ENCODE measurements at regions of chr7 and their contacts with region 1.

Region 1: GRCh38 chr7:83457022-83457892 is 191.7 kb downstream of the SEMA3E start:
- DNase-seq: no peak
- H3K4me3 ChIP-seq: no peak overlapping the region
- H3K27ac ChIP-seq: no peak overlapping the region
- H3K4me1 ChIP-seq: no peaks in the 10 kb centered on the region
- H3K27me3 ChIP-seq: no peaks in the 10 kb centered on the region
- CTCF ChIP-seq: no peak

Region 2: GRCh38 chr7:82945480-82945879 is 511.8 kb before region 1 on chr7:
- CTCF ChIA-PET with region 1: no interaction called
- POLR2A ChIA-PET with region 1: interaction called, 10 read pairs
- intact Hi-C with region 1: no loop called
- DNase-seq: no peak
- H3K4me3 ChIP-seq: no peak overlapping the region
- H3K27ac ChIP-seq: no peak overlapping the region
- H3K4me1 ChIP-seq: no peaks in the 10 kb centered on the region
- H3K27me3 ChIP-seq: no peaks in the 10 kb centered on the region
- CTCF ChIP-seq: no peak

Measured in PC-9 (cell line).